Activated CD4-positive, alpha-beta T cell treated with anti-CD3 and anti-CD28 coated beads, Interleukin-2, amount 10 ng/mL, durations not matched to agents 24 days and 14 days (primary cell): ENCODE measurements at regions of chr1 and their contacts with region 1.

Region 1: GRCh38 chr1:15847100-15847892 is at the start of gene SPEN:
- DNase-seq: peak; percentile 100
- H3K4me3 Mint-ChIP-seq: peak within 1 kb of the TSS; percentile 95
- H3K27ac Mint-ChIP-seq: peak within 1 kb of the TSS; percentile 96
- H3K4me1 Mint-ChIP-seq: peaks cover 42% of the 10 kb centered on the region
- H3K27me3 Mint-ChIP-seq: no peaks in the 10 kb centered on the region
- total RNA-seq, gene SPEN: 89.1 and 94.1 TPM in 2 replicates

Region 2: DNA sequence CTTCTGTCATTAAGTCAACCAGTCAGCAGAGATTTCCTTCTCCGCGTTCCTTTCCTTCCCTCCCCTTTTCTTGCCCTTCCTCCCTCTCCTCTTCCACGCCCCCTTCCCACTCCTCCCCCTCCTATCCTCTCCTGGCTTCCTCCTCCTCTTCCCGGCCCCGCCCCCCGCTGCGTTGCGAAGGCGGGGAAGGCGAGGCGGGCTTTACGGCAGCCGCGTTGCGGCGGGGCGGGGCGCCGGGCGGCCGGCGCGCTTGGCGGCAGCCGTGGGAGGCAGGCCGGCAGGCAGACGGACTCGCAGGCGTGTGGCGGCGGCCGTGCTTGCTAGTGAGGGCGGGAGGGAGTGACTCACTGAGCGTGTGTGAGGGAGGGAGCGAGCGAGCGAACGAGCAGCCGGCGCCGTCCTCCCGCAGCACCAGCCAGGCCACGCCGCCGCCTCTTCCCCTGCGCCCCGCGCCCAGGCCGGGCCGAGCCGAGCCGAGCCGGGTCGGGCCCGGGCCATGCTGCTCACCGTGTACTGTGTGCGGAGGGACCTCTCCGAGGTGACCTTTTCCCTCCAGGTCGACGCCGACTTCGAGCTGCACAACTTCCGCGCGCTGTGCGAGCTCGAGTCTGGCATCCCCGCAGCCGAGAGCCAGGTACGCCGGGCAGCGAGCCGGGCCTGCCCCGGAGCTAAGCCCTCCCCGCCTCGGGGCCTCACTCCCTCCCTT is 230.0 kb before region 1 on chr1 and contains the start of gene DDI2:
- intact Hi-C with region 1: loop called (anchors 5 kb)
- DNase-seq: peak; percentile 99
- H3K4me3 Mint-ChIP-seq: peak within 1 kb of the TSS; percentile 90
- H3K27ac Mint-ChIP-seq: peak within 1 kb of the TSS; percentile 94
- H3K4me1 Mint-ChIP-seq: peaks cover 32% of the 10 kb centered on the region
- H3K27me3 Mint-ChIP-seq: no peaks in the 10 kb centered on the region
- total RNA-seq, gene DDI2: 50.5 and 53.0 TPM in 2 replicates

Region 3: GRCh38 chr1:15885701-15886610 is 38.7 kb after region 1 on chr1:
- intact Hi-C with region 1: loop called (anchors 5 kb)
- DNase-seq: peak; percentile 69
- H3K4me3 Mint-ChIP-seq: peak overlapping the region; percentile 24
- H3K27ac Mint-ChIP-seq: peak overlapping the region; percentile 73
- H3K4me1 Mint-ChIP-seq: peaks cover 31% of the 10 kb centered on the region
- H3K27me3 Mint-ChIP-seq: no peaks in the 10 kb centered on the region

Region 4: GRCh38 chr1:15949453-15950245 is 102.4 kb after region 1 on chr1:
- intact Hi-C with region 1: loop called (anchors 5 kb)
- DNase-seq: peak; percentile 87
- H3K4me3 Mint-ChIP-seq: peak overlapping the region; percentile 67
- H3K27ac Mint-ChIP-seq: peak overlapping the region; percentile 94
- H3K4me1 Mint-ChIP-seq: peaks cover 73% of the 10 kb centered on the region
- H3K27me3 Mint-ChIP-seq: no peaks in the 10 kb centered on the region

Region 5: DNA sequence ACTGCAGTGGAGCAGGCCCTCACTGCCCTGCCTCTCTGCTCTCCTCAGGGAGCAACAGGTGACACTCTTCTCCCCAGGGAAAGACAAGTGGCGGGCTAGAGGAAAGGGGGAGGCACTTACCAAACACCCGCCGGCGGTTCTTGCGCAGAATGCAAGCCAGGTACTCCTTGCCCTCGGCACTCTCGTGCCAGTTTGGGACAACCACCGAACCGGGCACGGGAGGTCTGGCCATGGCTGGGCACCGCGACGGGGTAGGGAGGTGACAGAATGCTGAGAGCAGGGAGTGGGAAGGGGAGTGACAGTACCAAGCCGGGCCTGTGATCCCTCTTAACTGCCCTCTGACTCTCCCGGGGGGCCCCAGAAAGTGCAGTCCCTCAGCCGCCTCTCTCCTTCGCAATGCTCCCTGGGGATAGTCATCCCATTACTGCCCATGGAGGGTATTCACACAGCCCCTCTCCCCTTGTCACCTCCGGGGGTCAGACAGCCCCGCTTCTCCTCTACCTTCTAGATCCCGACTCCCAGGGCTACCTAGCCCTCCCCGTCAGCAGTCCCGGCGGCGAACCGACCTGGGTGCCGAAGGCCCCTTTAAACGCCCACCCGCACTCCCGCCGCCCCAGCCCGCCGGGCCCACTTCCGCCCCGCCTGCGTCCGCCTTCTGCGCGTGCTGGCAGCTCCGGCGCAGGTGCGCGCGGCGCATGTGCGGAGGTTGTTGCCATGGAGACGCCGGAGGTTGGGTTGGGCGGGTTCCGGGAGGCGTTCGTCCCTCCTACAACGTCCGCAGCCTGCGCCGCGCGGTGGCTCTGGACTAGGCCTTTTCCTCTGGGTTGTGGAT is 389.4 kb after region 1 on chr1 and contains the start of gene CPLANE2:
- intact Hi-C with region 1: loop called (anchors 5 kb)
- DNase-seq: peak; percentile 99
- H3K4me3 Mint-ChIP-seq: peak within 1 kb of the TSS; percentile 91
- H3K27ac Mint-ChIP-seq: peak within 1 kb of the TSS; percentile 92
- H3K4me1 Mint-ChIP-seq: peaks cover 20% of the 10 kb centered on the region
- H3K27me3 Mint-ChIP-seq: no peaks in the 10 kb centered on the region
- total RNA-seq, gene CPLANE2: 4.8 and 6.1 TPM in 2 replicates